B cell (primary cell): ENCODE measurements at regions of chr17 and their contacts with region 1.

Region 1: DNA sequence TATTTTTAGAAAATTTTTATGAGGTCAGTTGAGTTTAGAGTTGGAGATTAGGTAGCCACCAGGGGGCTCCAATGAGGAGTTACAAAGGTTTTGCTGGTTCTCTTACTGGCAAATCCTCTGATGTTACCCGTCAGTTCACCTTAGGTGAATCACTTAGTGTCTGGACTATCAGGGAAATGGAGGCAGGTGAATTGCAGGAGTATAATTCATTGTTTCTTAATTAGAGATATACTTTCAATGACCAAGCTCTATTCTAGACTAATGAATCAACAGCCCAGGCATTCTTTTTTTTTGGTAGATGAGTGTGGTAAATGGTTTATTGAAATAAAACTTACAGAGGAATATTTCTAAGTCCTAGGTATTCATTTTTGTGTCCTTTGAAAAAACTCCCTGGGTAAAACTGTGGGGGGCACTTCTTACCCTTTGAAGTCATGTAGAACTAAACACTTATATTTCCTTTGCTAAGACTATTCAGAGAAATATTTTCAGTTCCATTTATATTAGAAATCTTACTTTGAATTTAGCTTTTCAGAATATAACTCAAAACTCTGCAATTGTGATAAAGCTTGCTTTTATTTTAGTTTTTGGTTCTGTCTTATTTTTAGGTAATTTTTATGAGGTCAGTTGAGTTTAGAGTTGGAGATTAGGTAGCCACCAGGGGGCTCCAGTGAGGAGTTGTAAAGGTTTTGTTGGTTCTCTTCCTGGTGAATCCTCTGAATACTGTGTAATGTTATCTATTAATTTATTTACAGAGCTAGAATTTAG is 17.7 kb downstream of the PSMD11 start:
- DNase-seq: peak; percentile 73
- ATAC-seq: peak; percentile 80
- H3K4me3 ChIP-seq: no peak overlapping the region
- H3K4me3 Mint-ChIP-seq: no peak overlapping the region
- H3K27ac ChIP-seq: peak overlapping the region in 1 of 2 donors; percentile 25
- H3K27ac Mint-ChIP-seq: no peak overlapping the region
- H3K4me1 ChIP-seq: peaks cover 0 to 3% of the 10 kb centered on the region in 2 donors
- H3K4me1 Mint-ChIP-seq: peaks cover 7% of the 10 kb centered on the region
- H3K27me3 ChIP-seq: no peaks in the 10 kb centered on the region
- H3K27me3 Mint-ChIP-seq: no peaks in the 10 kb centered on the region
- CTCF ChIP-seq: peak; percentile 72

Region 2: GRCh38 chr17:32265192-32265923 is 196.7 kb before region 1 on chr17 and contains the start of gene RHBDL3:
- CTCF ChIA-PET with region 1: no interaction called
- POLR2A ChIA-PET with region 1: no interaction called
- intact Hi-C with region 1: no loop called
- DNase-seq: peak; percentile 41
- ATAC-seq: peak; percentile 39
- H3K4me3 ChIP-seq: peak within 1 kb of the TSS in 4 of 5 experiments; percentile 42 to 62 (median 56)
- H3K4me3 Mint-ChIP-seq: peak within 1 kb of the TSS; percentile 84
- H3K27ac ChIP-seq: no peak within 1 kb of the TSS
- H3K27ac Mint-ChIP-seq: peak within 1 kb of the TSS; percentile 37
- H3K4me1 ChIP-seq: peaks cover 24 to 30% of the 10 kb centered on the region in 2 donors
- H3K4me1 Mint-ChIP-seq: peaks cover 17% of the 10 kb centered on the region
- H3K27me3 ChIP-seq: peaks cover 0 to 61% (median 43%) of the 10 kb centered on the region in 4 experiments
- H3K27me3 Mint-ChIP-seq: peaks cover 77% of the 10 kb centered on the region
- CTCF ChIP-seq: no peak
- total RNA-seq, gene RHBDL3: not detected in 2 replicates

Region 3: GRCh38 chr17:32356750-32357149 is 105.3 kb before region 1 on chr17:
- CTCF ChIA-PET with region 1: no interaction called
- POLR2A ChIA-PET with region 1: no interaction called
- intact Hi-C with region 1: no loop called
- DNase-seq: no peak
- ATAC-seq: no peak
- H3K4me3 ChIP-seq: no peak overlapping the region
- H3K4me3 Mint-ChIP-seq: no peak overlapping the region
- H3K27ac ChIP-seq: no peak overlapping the region
- H3K27ac Mint-ChIP-seq: no peak overlapping the region
- H3K4me1 ChIP-seq: peaks cover 24 to 32% of the 10 kb centered on the region in 2 donors
- H3K4me1 Mint-ChIP-seq: peaks cover 38% of the 10 kb centered on the region
- H3K27me3 ChIP-seq: no peaks in the 10 kb centered on the region
- H3K27me3 Mint-ChIP-seq: no peaks in the 10 kb centered on the region
- CTCF ChIP-seq: no peak

Region 4: GRCh38 chr17:32444308-32445073 is 17.5 kb before region 1 on chr17 and contains the start of gene PSMD11:
- CTCF ChIA-PET with region 1: interaction called, 30 read pairs
- POLR2A ChIA-PET with region 1: no interaction called
- intact Hi-C with region 1: no loop called
- DNase-seq: peak; percentile 98
- ATAC-seq: peak; percentile 98
- H3K4me3 ChIP-seq: peak within 1 kb of the TSS; percentile 78 to 96 (median 95)
- H3K4me3 Mint-ChIP-seq: peak within 1 kb of the TSS; percentile 86
- H3K27ac ChIP-seq: peak within 1 kb of the TSS; percentile 48 to 89
- H3K27ac Mint-ChIP-seq: peak within 1 kb of the TSS; percentile 90
- H3K4me1 ChIP-seq: peaks cover 18 to 23% of the 10 kb centered on the region in 2 donors
- H3K4me1 Mint-ChIP-seq: peaks cover 34% of the 10 kb centered on the region
- H3K27me3 ChIP-seq: peaks cover 0 to 2% (median under 1%) of the 10 kb centered on the region in 4 experiments
- H3K27me3 Mint-ChIP-seq: no peaks in the 10 kb centered on the region
- CTCF ChIP-seq: peak; percentile 46
- total RNA-seq, gene PSMD11: 73.4 and 78.7 TPM in 2 replicates

Region 5: GRCh38 chr17:32449963-32450362 is 12.1 kb before region 1 on chr17:
- CTCF ChIA-PET with region 1: interaction called, 30 read pairs
- POLR2A ChIA-PET with region 1: no interaction called
- intact Hi-C with region 1: no loop called
- DNase-seq: no peak
- ATAC-seq: no peak
- H3K4me3 ChIP-seq: no peak overlapping the region
- H3K4me3 Mint-ChIP-seq: no peak overlapping the region
- H3K27ac ChIP-seq: no peak overlapping the region
- H3K27ac Mint-ChIP-seq: no peak overlapping the region
- H3K4me1 ChIP-seq: peaks cover 13 to 14% of the 10 kb centered on the region in 2 donors
- H3K4me1 Mint-ChIP-seq: peaks cover 28% of the 10 kb centered on the region
- H3K27me3 ChIP-seq: no peaks in the 10 kb centered on the region
- H3K27me3 Mint-ChIP-seq: no peaks in the 10 kb centered on the region
- CTCF ChIP-seq: no peak

Region 6: GRCh38 chr17:32519228-32520103 is 57.4 kb after region 1 on chr17:
- CTCF ChIA-PET with region 1: interaction called, 10 read pairs
- POLR2A ChIA-PET with region 1: no interaction called
- intact Hi-C with region 1: no loop called
- DNase-seq: peak; percentile 80
- ATAC-seq: peak; percentile 26
- H3K4me3 ChIP-seq: peak overlapping the region; percentile 33 to 68 (median 47)
- H3K4me3 Mint-ChIP-seq: peak overlapping the region; percentile 88
- H3K27ac ChIP-seq: peak overlapping the region; percentile 69 to 79
- H3K27ac Mint-ChIP-seq: peak overlapping the region; percentile 90
- H3K4me1 ChIP-seq: peaks cover 90 to 96% of the 10 kb centered on the region in 2 donors
- H3K4me1 Mint-ChIP-seq: peaks cover 85% of the 10 kb centered on the region
- H3K27me3 ChIP-seq: no peaks in the 10 kb centered on the region
- H3K27me3 Mint-ChIP-seq: no peaks in the 10 kb centered on the region
- CTCF ChIP-seq: no peak

Region 7: GRCh38 chr17:32609085-32609484 is 147.1 kb after region 1 on chr17:
- CTCF ChIA-PET with region 1: interaction called, 38 read pairs
- POLR2A ChIA-PET with region 1: no interaction called
- intact Hi-C with region 1: loop called (anchors 1 kb)
- DNase-seq: peak; percentile 85
- ATAC-seq: peak; percentile 100
- H3K4me3 ChIP-seq: no peak overlapping the region
- H3K4me3 Mint-ChIP-seq: no peak overlapping the region
- H3K27ac ChIP-seq: no peak overlapping the region
- H3K27ac Mint-ChIP-seq: no peak overlapping the region
- H3K4me1 ChIP-seq: peaks cover 6 to 8% of the 10 kb centered on the region in 2 donors
- H3K4me1 Mint-ChIP-seq: peaks cover 9% of the 10 kb centered on the region
- H3K27me3 ChIP-seq: no peaks in the 10 kb centered on the region
- H3K27me3 Mint-ChIP-seq: no peaks in the 10 kb centered on the region
- CTCF ChIP-seq: peak; percentile 82

Region 8: GRCh38 chr17:32621617-32622312 is 159.7 kb after region 1 on chr17:
- CTCF ChIA-PET with region 1: interaction called, 11 read pairs
- POLR2A ChIA-PET with region 1: no interaction called
- intact Hi-C with region 1: no loop called
- DNase-seq: no peak
- ATAC-seq: no peak
- H3K4me3 ChIP-seq: no peak overlapping the region
- H3K4me3 Mint-ChIP-seq: no peak overlapping the region
- H3K27ac ChIP-seq: no peak overlapping the region
- H3K27ac Mint-ChIP-seq: no peak overlapping the region
- H3K4me1 ChIP-seq: no peaks in the 10 kb centered on the region
- H3K4me1 Mint-ChIP-seq: no peaks in the 10 kb centered on the region
- H3K27me3 ChIP-seq: no peaks in the 10 kb centered on the region
- H3K27me3 Mint-ChIP-seq: no peaks in the 10 kb centered on the region
- CTCF ChIP-seq: no peak

Region 9: GRCh38 chr17:32755045-32755805 is 293.2 kb after region 1 on chr17:
- CTCF ChIA-PET with region 1: interaction called, 20 read pairs
- POLR2A ChIA-PET with region 1: no interaction called
- intact Hi-C with region 1: no loop called
- DNase-seq: peak; percentile 62
- ATAC-seq: peak; percentile 41
- H3K4me3 ChIP-seq: no peak overlapping the region
- H3K4me3 Mint-ChIP-seq: no peak overlapping the region
- H3K27ac ChIP-seq: no peak overlapping the region
- H3K27ac Mint-ChIP-seq: no peak overlapping the region
- H3K4me1 ChIP-seq: no peaks in the 10 kb centered on the region
- H3K4me1 Mint-ChIP-seq: no peaks in the 10 kb centered on the region
- H3K27me3 ChIP-seq: no peaks in the 10 kb centered on the region
- H3K27me3 Mint-ChIP-seq: no peaks in the 10 kb centered on the region
- CTCF ChIP-seq: peak; percentile 64